Activated CD4-positive, alpha-beta memory T cell treated with anti-CD3 and anti-CD28 coated beads for 36 hours (primary cell): ENCODE measurements at regions of chr2 and their contacts with region 1.

Region 1: DNA sequence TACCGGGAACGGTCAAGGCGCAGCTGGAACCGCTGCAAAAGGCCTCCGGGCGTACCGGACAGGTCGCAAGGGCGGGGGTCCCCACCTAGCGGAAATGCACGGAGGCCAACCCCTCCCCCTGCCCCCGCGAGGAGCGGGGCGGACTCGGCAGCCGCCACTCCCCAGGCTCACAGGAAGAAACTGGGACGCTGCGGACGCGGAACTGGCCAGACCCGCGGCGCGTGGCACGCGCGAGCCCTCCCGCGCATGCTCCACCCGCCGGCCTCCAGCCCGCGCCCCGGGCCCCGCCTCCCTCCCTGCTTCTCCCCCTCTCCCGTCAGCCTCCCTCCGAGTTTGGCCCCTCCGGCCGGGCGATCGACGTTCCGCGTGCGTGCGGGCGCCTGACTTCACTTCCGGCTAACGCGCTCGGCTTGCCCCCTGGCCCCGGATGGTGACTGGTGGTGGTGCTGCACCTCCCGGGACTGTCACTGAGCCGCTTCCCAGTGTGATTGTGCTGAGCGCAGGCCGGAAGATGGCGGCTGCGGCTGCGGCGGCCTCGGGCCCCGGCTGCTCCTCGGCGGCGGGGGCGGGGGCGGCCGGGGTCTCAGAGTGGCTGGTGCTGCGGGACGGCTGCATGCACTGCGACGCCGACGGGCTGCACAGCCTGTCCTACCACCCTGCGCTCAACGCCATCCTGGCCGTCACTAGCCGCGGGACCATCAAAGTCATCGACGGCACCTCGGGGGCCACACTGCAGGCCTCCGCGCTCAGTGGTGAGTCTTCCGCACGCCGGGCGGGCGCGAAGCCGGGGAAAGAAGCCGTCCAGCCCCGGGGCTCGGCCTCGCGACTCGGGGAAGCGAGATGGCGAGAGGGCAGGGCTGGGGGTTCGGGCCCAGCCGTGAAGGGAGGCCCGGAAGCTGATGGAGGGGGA is at the start of gene BIRC6:
- DNase-seq: peak; percentile 99
- H3K4me3 Mint-ChIP-seq: peak within 1 kb of the TSS; percentile 84
- H3K27ac Mint-ChIP-seq: peak within 1 kb of the TSS; percentile 92
- H3K4me1 Mint-ChIP-seq: peaks cover 39% of the 10 kb centered on the region
- H3K27me3 Mint-ChIP-seq: no peaks in the 10 kb centered on the region
- total RNA-seq, gene BIRC6: 58.2 to 62.4 TPM

Region 2: DNA sequence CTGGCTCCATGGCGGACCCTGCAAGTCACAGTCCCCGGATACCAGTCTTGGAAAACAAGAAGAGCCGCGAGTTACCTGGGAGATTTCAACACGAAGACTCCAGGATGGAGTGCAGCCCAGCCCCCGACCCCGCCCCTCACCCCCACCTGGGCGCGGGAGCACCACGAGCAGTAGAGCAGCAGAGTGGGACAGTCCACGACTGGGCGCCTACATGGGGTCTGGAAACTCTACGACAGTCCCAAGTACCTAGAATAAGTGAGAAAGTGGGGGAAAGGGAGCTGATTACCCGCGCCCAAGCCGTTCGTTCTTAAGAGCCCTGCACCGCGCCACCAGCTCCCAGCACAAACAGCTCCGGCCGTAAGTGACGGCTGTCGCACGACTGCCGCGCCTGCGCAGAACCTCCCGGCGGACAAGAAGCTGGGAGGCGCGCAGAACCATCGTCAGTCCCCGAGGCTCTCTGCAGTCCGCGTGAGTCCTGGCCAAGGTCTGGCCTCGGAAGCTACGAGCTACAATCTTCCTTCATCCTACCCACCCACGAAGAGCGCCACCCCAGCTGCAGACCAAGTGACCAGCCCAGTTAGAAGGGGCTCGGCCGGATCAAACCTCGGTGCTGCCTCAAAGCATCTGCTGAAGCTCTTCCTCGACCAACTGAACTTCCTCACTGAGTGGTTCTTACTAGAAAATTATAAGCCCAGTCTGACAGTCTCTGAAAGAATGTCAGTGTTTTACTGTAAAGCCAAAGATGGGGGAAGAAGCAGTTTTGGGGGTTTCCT is 317.4 kb before region 1 on chr2 and contains the start of gene DPY30:
- CTCF ChIA-PET with region 1: interaction called, 3 read pairs
- POLR2A ChIA-PET with region 1: no interaction called
- intact Hi-C with region 1: loop called (anchors 10 kb)
- DNase-seq: peak; percentile 94
- H3K4me3 Mint-ChIP-seq: peak within 1 kb of the TSS; percentile 81
- H3K27ac Mint-ChIP-seq: peak within 1 kb of the TSS; percentile 88
- H3K4me1 Mint-ChIP-seq: peaks cover 12% of the 10 kb centered on the region
- H3K27me3 Mint-ChIP-seq: no peaks in the 10 kb centered on the region
- total RNA-seq, gene DPY30: 81.6 to 89.2 TPM

Region 3: GRCh38 chr2:32310577-32310976 is 46.4 kb before region 1 on chr2:
- CTCF ChIA-PET with region 1: no interaction called
- POLR2A ChIA-PET with region 1: no interaction called
- intact Hi-C with region 1: no loop called
- DNase-seq: no peak
- H3K4me3 Mint-ChIP-seq: no peak overlapping the region
- H3K27ac Mint-ChIP-seq: no peak overlapping the region
- H3K4me1 Mint-ChIP-seq: no peaks in the 10 kb centered on the region
- H3K27me3 Mint-ChIP-seq: no peaks in the 10 kb centered on the region